AG04449 (cell line): ENCODE measurements at regions of chr17 and their contacts with region 1.

Region 1: DNA sequence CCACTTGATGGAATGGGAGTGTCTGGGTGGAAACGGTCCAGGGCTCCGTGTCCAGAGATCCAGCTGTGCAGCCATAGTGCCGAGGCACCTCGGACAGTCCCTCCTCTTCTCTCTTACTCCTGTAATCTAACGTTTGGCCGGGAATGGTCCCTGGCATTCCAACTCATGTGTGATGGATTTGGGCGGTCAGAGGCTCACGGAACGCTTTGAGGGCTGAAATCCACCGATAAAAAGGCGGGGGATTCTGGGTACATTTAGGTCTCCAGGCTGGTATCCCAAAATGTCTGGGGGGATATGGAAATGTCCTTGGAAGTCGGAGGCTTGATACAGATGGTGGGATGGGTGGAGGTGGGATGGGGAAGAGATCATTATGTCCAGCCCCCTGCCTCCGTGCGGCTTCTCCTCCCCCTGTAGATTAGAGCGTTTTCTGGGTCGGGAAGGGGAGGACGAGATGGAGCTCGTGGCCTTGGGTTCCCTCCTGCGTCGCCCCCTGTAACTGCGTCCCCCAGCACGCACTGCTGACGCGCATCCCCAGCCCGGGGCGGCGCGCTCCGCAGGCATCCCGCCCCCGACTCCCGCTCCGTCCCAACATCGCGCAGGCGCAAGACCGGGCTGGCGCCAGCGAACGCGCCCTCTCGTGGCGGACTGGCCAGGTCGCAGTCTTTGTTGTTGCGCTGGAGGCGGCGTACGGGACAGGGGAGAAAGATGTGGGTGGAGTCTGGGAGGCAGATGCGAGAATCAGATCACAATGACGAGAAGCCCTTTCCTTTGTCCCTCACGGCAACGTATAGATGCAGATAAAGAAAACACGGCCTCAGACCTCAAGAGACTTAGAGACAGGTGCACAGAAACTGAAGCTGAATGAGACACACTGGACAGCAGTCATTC is 4.5 kb upstream of the SGCA start:
- DNase-seq: no peak
- H3K4me3 ChIP-seq: peak overlapping the region; percentile 75
- CTCF ChIP-seq: peak; percentile 97

Region 2: DNA sequence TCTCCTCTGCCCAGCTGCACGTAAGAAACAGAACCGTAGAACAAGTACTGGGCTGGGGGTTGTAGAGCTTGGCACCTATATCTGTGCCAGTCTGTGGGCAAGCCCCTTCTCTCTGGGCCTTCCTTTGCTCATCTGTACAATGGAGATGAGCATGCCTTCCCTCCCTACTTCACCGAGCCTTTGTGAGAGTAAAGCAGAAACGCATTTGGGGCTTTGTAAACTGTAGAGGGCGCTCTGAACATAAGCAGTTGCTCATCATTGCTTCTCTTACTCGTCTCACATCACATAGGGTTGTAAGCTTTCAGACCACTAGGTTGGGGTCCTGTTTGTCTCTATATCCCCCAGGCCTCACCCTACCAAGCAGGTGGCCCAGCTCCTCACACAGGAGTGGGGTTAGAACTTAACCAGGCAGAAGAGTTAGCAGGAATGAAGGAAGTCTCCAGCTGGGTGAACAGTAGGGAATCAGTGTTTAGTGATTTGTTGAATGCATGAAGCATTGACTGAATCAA is 46.4 kb before region 1 on chr17:
- CTCF ChIA-PET with region 1: interaction called, 83 read pairs
- POLR2A ChIA-PET with region 1: no interaction called
- DNase-seq: no peak
- H3K4me3 ChIP-seq: no peak overlapping the region
- CTCF ChIP-seq: peak; percentile 69

Region 3: GRCh38 chr17:50139950-50140871 is 21.1 kb before region 1 on chr17:
- CTCF ChIA-PET with region 1: interaction called, 143 read pairs
- POLR2A ChIA-PET with region 1: no interaction called
- DNase-seq: no peak
- H3K4me3 ChIP-seq: no peak overlapping the region
- CTCF ChIP-seq: peak; percentile 94

Region 4: DNA sequence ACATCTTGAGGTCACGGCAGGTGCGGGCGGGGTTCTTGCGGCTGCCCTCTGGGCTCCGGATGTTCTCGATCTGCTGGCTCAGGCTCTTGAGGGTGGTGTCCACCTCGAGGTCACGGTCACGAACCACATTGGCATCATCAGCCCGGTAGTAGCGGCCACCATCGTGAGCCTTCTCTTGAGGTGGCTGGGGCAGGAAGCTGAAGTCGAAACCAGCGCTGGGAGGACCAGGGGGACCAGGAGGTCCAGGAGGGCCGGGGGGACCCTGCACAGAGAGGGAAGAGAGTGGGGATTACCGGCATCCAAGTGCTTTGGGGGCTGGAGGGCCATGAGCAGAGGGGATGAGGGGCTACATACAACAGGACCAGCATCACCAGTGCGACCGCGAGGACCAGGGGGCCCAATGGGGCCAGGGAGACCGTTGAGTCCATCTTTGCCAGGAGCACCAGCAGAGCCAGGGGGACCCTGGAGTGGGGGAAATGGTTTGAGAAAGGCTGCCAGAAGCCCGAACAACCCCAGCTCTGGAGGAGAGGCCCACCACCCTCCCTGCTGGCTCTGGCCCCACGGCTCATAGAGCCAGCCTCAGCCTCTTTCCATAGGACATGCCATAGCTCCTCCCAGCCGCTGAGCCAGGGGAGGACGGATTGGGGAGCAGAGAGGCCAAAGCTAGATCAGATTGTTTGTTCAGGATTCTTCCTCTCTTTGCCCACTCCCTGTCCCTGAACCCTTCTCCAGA is 25.6 kb after region 1 on chr17:
- CTCF ChIA-PET with region 1: no interaction called
- POLR2A ChIA-PET with region 1: no interaction called
- DNase-seq: no peak
- H3K4me3 ChIP-seq: no peak overlapping the region
- CTCF ChIP-seq: no peak

Region 5: DNA sequence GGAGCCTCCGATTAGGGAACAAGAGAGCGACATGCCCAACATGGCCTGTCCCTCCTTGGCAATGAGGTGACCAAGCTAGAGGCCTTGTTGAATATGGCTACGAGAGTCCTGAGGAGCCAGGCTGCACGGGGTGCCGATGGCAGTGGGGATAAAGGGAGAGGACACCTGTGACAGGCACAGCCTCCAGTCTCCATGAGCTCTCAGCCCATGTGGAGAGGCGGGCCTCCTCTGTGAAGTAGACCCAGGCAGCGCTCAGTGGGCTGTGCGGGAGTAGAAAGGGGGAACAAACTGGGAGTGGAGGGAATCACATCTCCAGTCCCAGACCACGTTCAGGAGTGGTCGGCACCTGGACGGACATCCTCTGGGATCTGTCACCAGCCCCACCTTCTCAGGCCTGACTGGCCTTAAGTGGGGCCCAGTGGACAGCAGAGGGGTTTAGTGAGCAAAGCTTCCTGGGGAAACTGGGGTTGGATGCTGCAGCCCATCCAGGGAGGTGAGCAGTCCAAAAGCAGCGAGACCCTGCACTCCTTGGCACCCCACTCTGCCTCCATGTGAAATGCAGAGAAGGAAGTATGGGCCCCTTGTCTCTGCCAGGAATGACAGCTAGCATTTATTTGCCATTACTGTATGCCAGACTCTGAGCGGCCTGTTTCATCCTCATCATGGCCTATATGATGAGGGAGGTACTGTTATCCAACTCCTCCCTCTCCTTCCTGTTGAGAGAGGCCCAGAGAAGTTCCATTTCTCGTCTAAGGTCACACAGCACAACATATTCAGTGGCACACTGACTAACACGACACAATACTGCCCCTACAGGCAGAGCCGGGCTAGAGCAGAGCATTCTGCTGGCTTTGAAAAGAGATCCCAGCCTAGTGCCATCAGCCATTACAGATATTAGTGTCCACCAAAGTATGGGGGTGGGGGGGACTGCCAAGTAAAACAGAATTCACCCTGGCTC is 108.5 kb after region 1 on chr17:
- CTCF ChIA-PET with region 1: interaction called, 410 read pairs
- POLR2A ChIA-PET with region 1: no interaction called
- DNase-seq: no peak
- H3K4me3 ChIP-seq: peak overlapping the region; percentile 53
- CTCF ChIP-seq: peak; percentile 80

Region 6: GRCh38 chr17:50289991-50290702 is 128.9 kb after region 1 on chr17:
- CTCF ChIA-PET with region 1: interaction called, 455 read pairs
- POLR2A ChIA-PET with region 1: no interaction called
- DNase-seq: peak; percentile 96
- H3K4me3 ChIP-seq: peak overlapping the region; percentile 52
- CTCF ChIP-seq: no peak